CD4-positive, alpha-beta T cell (primary cell): ENCODE measurements at regions of chr5 and their contacts with region 1.

Region 1: GRCh38 chr5:149212198-149212951 is 59.3 kb upstream of the AFAP1L1 start:
- DNase-seq: no peak
- ATAC-seq: no peak
- H3K4me3 ChIP-seq: no peak overlapping the region
- H3K4me3 Mint-ChIP-seq: no peak overlapping the region
- H3K27ac ChIP-seq: no peak overlapping the region
- H3K27ac Mint-ChIP-seq: no peak overlapping the region
- H3K4me1 ChIP-seq: no peaks in the 10 kb centered on the region
- H3K4me1 Mint-ChIP-seq: peaks cover 16% of the 10 kb centered on the region
- H3K27me3 ChIP-seq: no peaks in the 10 kb centered on the region
- H3K27me3 Mint-ChIP-seq: no peaks in the 10 kb centered on the region
- CTCF ChIP-seq: no peak

Region 2: GRCh38 chr5:149162401-149163084 is 49.8 kb before region 1 on chr5:
- CTCF ChIA-PET with region 1: no interaction called
- POLR2A ChIA-PET with region 1: no interaction called
- intact Hi-C with region 1: loop called in 1 of 2 experiments (anchors 5 kb)
- DNase-seq: no peak
- ATAC-seq: no peak
- H3K4me3 ChIP-seq: no peak overlapping the region
- H3K4me3 Mint-ChIP-seq: no peak overlapping the region
- H3K27ac ChIP-seq: no peak overlapping the region
- H3K27ac Mint-ChIP-seq: no peak overlapping the region
- H3K4me1 ChIP-seq: no peaks in the 10 kb centered on the region
- H3K4me1 Mint-ChIP-seq: no peaks in the 10 kb centered on the region
- H3K27me3 ChIP-seq: no peaks in the 10 kb centered on the region
- H3K27me3 Mint-ChIP-seq: no peaks in the 10 kb centered on the region
- CTCF ChIP-seq: no peak